Ascending aorta (tissue), 2 donors: ENCODE measurements at regions of chr2 and their contacts with region 1.

Region 1: DNA sequence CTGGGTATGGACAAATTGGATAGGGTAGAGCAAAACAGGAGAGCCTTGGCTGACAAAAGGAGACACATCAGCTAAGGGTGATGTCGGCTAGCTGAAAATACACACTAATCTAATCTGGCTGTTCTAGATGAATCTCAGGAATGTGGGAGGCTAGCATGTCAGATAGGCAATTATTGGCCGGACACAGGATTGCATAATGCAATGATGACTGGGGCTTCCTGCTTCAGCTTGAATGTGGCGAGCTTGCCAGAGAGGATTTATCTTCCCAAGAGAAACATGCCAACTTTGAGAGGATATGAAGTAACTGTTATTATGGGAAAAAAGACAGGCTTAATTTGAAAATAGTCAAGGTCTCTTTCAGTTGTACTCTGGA is 102.4 kb downstream of the TRIB2 start:
- DNase-seq: peak; percentile 17 to 94
- H3K4me3 ChIP-seq: peak overlapping the region in 1 of 2 donors; percentile 33
- H3K27ac ChIP-seq: peak overlapping the region; percentile 78 to 83
- H3K4me1 ChIP-seq: peaks cover 6 to 10% of the 10 kb centered on the region in 2 donors
- H3K27me3 ChIP-seq: no peaks in the 10 kb centered on the region
- CTCF ChIP-seq: no peak

Region 2: GRCh38 chr2:12456293-12457151 is 362.6 kb before region 1 on chr2:
- intact Hi-C with region 1: loop called (anchors 10 kb)
- DNase-seq: peak; percentile 68 to 96
- H3K4me3 ChIP-seq: peak overlapping the region in 1 of 2 donors; percentile 10
- H3K27ac ChIP-seq: peak overlapping the region; percentile 8 to 51
- H3K4me1 ChIP-seq: peaks cover 3 to 13% of the 10 kb centered on the region in 2 donors
- H3K27me3 ChIP-seq: no peaks in the 10 kb centered on the region
- CTCF ChIP-seq: no peak

Region 3: GRCh38 chr2:12733846-12734245 is 85.2 kb before region 1 on chr2:
- intact Hi-C with region 1: loop called (anchors 5 kb)
- DNase-seq: no peak
- H3K4me3 ChIP-seq: no peak overlapping the region
- H3K27ac ChIP-seq: peak overlapping the region; percentile 59 to 62
- H3K4me1 ChIP-seq: peaks cover 3 to 19% of the 10 kb centered on the region in 2 donors
- H3K27me3 ChIP-seq: no peaks in the 10 kb centered on the region
- CTCF ChIP-seq: no peak

Region 4: GRCh38 chr2:12918835-12919445 is 99.9 kb after region 1 on chr2:
- intact Hi-C with region 1: loop called (anchors 2 kb)
- DNase-seq: peak in 1 of 2 donors; percentile 83
- H3K4me3 ChIP-seq: peak overlapping the region in 1 of 2 donors; percentile 24
- H3K27ac ChIP-seq: peak overlapping the region; percentile 78 to 87
- H3K4me1 ChIP-seq: peaks cover 0 to 10% of the 10 kb centered on the region in 2 donors
- H3K27me3 ChIP-seq: no peaks in the 10 kb centered on the region
- CTCF ChIP-seq: no peak